Activated CD4-positive, alpha-beta T cell treated with anti-CD3 and anti-CD28 coated beads for 36 hours (primary cell): ENCODE measurements at regions of chr2 and their contacts with region 1.

Region 1: GRCh38 chr2:7758073-7758759 is 841.0 kb downstream of the RNF144A start:
- DNase-seq: no peak
- ATAC-seq: peak; percentile 82
- H3K4me3 Mint-ChIP-seq: no peak overlapping the region
- H3K27ac Mint-ChIP-seq: peak overlapping the region; percentile 62
- H3K4me1 Mint-ChIP-seq: peaks cover 16% of the 10 kb centered on the region
- H3K27me3 Mint-ChIP-seq: peaks cover 14% of the 10 kb centered on the region

Region 2: DNA sequence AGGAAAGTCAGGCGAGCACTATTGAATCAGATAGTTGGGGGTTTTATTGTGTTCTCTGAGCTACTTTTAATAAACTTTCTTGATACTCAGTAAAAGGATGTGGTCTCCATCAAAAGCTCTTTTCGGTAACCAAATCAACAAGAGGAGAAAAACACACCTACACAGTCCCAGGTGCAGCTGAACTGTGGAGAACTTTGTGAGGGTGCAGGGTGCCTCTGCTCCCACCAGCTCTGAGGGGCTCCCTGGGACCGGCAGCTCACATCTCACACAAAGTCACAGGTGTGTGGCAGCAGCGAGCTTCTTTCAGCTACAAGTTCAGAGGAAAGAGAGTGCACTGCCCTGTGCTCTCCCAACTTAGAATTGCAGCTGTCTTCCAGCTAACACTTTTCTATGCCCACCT is 190.6 kb before region 1 on chr2:
- CTCF ChIA-PET with region 1: no interaction called
- POLR2A ChIA-PET with region 1: no interaction called
- intact Hi-C with region 1: loop called (anchors 5 kb)
- DNase-seq: peak; percentile 81
- ATAC-seq: peak; percentile 93
- H3K4me3 Mint-ChIP-seq: peak overlapping the region; percentile 9
- H3K27ac Mint-ChIP-seq: peak overlapping the region; percentile 88
- H3K4me1 Mint-ChIP-seq: peaks cover 55% of the 10 kb centered on the region
- H3K27me3 Mint-ChIP-seq: no peaks in the 10 kb centered on the region

Region 3: GRCh38 chr2:7620255-7620654 is 138.0 kb before region 1 on chr2:
- CTCF ChIA-PET with region 1: no interaction called
- POLR2A ChIA-PET with region 1: no interaction called
- intact Hi-C with region 1: no loop called
- DNase-seq: no peak
- ATAC-seq: peak; percentile 77
- H3K4me3 Mint-ChIP-seq: no peak overlapping the region
- H3K27ac Mint-ChIP-seq: no peak overlapping the region
- H3K4me1 Mint-ChIP-seq: peaks cover 9% of the 10 kb centered on the region
- H3K27me3 Mint-ChIP-seq: no peaks in the 10 kb centered on the region

Region 4: GRCh38 chr2:7719876-7720275 is 38.3 kb before region 1 on chr2:
- CTCF ChIA-PET with region 1: no interaction called
- POLR2A ChIA-PET with region 1: no interaction called
- intact Hi-C with region 1: no loop called
- DNase-seq: no peak
- ATAC-seq: no peak
- H3K4me3 Mint-ChIP-seq: no peak overlapping the region
- H3K27ac Mint-ChIP-seq: no peak overlapping the region
- H3K4me1 Mint-ChIP-seq: peaks cover 13% of the 10 kb centered on the region
- H3K27me3 Mint-ChIP-seq: no peaks in the 10 kb centered on the region

Region 5: GRCh38 chr2:7773362-7774360 is 15.4 kb after region 1 on chr2:
- CTCF ChIA-PET with region 1: interaction called, 5 read pairs
- POLR2A ChIA-PET with region 1: interaction called, 3 read pairs
- intact Hi-C with region 1: loop called (anchors 1 kb)
- DNase-seq: peak; percentile 66
- ATAC-seq: peak; percentile 76
- H3K4me3 Mint-ChIP-seq: peak overlapping the region; percentile 11
- H3K27ac Mint-ChIP-seq: peak overlapping the region; percentile 64
- H3K4me1 Mint-ChIP-seq: peaks cover 28% of the 10 kb centered on the region
- H3K27me3 Mint-ChIP-seq: peaks cover 3% of the 10 kb centered on the region

Region 6: DNA sequence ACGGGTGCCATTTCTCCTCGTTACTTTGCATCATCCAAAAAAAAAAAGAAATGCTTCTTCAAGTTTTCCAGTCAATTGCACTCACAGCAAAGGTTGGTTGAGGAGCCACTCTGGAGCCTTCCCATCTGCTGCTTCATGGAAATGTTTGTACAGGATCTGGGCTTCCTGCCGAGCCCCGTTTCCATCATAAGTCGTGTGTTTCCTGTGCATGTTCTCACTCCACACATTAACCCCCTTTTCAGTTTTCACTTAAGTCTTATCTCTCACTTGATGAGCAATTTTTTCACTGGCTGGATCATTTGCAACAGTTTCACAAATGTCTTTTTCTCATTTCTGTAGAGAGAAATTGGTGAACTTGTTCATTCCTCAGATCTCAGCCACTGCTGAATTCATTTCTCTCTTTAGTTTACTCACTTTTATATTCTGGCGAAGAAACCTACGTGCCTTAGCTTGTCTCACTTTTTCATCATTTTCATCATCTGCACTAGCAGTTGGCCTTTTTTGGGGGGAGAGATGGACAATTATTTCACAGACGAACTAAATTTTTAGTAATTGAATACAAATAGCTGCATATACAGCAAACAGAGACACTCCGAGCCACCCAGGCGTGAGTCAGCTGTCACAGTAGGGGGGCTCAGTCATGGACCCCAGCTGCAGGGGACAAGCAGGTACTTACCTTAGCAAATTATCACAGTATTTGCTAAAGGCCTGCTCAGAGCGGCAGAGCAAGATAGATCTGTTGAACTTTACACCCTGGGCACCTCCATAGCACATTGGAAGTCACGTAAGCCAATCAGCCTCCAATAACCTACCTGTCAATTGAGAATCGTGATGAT is 172.8 kb after region 1 on chr2:
- CTCF ChIA-PET with region 1: no interaction called
- POLR2A ChIA-PET with region 1: no interaction called
- intact Hi-C with region 1: loop called (anchors 1 kb)
- DNase-seq: peak; percentile 56
- ATAC-seq: peak; percentile 80
- H3K4me3 Mint-ChIP-seq: peak overlapping the region; percentile 0
- H3K27ac Mint-ChIP-seq: peak overlapping the region; percentile 93
- H3K4me1 Mint-ChIP-seq: peaks cover 33% of the 10 kb centered on the region
- H3K27me3 Mint-ChIP-seq: no peaks in the 10 kb centered on the region

Region 7: DNA sequence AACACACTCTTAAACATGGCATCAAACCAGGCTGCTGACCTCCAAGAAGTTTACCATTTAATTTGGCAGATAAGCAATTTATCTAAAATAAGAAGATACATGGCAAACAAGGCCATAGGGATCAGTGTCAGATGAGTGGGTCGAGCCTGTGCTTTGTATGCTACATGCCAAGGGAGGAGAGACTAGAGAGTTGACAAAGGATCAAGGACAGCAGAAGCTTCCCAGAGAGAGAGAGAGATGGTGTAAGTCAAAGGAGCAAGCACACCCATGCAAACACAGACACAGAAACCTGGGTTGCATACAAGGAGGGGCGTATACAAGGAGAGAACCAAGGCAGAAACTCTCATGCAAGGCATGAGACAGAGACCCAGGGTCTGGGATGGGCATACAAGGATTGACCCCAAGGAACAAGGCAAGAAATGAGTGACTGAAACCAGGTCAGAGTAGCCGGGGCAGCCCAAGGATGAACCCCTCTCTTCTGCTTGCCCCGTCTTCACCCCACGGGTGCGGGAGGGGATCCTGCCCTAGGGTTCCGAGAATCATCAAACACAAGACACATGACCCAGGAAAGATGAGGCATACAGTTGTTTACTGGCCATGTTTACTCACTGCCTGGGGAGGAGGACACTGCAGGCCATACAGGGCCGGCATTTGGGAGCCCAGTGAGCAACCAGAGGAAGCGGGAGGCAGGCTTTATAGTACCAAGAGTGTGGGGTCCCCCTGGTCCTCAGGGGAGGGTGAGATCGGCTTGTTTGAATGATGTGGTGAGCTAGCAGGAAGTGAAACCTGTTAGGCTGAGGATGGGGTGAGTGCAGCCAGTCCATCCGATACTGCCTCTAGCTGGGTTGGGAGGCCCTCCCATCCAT is 394.4 kb after region 1 on chr2:
- CTCF ChIA-PET with region 1: no interaction called
- POLR2A ChIA-PET with region 1: no interaction called
- intact Hi-C with region 1: loop called in 1 of 2 experiments (anchors 1 kb)
- DNase-seq: no peak
- ATAC-seq: no peak
- H3K4me3 Mint-ChIP-seq: no peak overlapping the region
- H3K27ac Mint-ChIP-seq: no peak overlapping the region
- H3K4me1 Mint-ChIP-seq: peaks cover 30% of the 10 kb centered on the region
- H3K27me3 Mint-ChIP-seq: no peaks in the 10 kb centered on the region